ENCODE measurements at regions of chr3 and their contacts with region 1.

Region 1: GRCh38 chr3:122564155-122564912 is at the starts of genes DTX3L and PARP9:
- DNase-seq: peak; percentile 51
- H3K4me3 ChIP-seq: peak within 1 kb of the TSS; percentile 66
- H3K27ac ChIP-seq: no peak within 1 kb of the TSS
- H3K4me1 ChIP-seq: peaks cover 26% of the 10 kb centered on the region
- CTCF ChIP-seq: no peak
- total RNA-seq, gene DTX3L: 1.5 and 2.2 TPM in 2 replicates
- total RNA-seq, gene PARP9: 1.4 TPM in 2 replicates

Region 2: DNA sequence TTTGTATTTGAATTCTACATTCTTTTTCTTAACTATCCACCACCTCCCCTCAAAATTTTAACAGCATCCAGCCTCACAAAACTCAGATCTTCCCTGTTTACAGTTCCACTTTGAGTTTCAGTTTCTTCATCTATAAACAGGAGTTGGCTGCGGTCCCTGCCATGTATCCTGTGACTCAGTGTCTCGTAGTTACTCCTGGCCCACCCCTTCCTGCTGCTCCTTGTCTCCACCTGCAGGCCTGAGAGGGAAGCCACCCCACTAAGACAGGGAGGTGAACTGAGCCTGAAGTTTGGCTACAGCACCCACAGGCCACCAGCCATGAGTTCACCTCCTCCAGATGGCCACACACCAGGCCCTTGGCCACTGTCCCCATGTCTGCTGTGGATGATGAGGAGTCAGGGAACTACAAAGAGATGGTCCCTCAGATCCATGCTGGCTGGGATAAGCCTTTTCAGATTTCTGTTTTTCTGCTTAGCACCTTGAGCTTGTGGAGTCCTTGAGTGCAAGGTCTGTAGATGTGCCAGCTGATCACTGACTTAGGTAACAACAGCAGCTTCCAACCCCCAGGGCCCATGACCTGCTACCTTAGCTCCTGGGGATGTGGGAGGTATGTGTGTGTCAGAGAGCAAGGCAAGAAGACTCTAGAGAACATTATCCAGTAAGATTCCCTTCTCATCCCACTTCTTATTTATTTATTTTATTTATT is 471.7 kb before region 1 on chr3:
- CTCF ChIA-PET with region 1: no interaction called
- POLR2A ChIA-PET with region 1: no interaction called
- intact Hi-C with region 1: no loop called
- DNase-seq: peak; percentile 56
- H3K4me3 ChIP-seq: peak overlapping the region; percentile 49
- H3K27ac ChIP-seq: peak overlapping the region; percentile 82
- H3K4me1 ChIP-seq: peaks cover 68% of the 10 kb centered on the region
- CTCF ChIP-seq: peak; percentile 87

Region 3: DNA sequence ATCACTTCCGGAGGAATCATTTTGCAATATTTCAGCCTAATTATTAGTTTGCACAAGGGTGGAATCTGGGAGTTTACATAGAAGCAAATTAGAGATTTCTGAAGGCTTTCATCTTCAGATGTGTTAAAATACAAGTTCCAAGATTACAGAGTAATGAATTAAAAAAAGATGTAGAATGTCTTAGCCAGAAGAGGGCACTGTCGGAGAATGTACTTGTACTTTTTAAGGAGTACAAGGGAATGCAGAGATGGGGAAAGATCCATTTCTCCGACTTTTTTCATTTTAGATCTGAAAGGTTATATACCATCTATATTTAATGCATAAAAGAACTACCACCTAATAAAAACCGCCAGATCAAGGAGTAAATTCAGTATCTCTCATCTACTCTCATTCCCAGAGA is 105.3 kb before region 1 on chr3:
- CTCF ChIA-PET with region 1: no interaction called
- POLR2A ChIA-PET with region 1: no interaction called
- intact Hi-C with region 1: loop called (anchors 5 kb)
- DNase-seq: peak; percentile 51
- H3K4me3 ChIP-seq: no peak overlapping the region
- H3K27ac ChIP-seq: no peak overlapping the region
- H3K4me1 ChIP-seq: no peaks in the 10 kb centered on the region
- CTCF ChIP-seq: peak; percentile 85

Region 4: DNA sequence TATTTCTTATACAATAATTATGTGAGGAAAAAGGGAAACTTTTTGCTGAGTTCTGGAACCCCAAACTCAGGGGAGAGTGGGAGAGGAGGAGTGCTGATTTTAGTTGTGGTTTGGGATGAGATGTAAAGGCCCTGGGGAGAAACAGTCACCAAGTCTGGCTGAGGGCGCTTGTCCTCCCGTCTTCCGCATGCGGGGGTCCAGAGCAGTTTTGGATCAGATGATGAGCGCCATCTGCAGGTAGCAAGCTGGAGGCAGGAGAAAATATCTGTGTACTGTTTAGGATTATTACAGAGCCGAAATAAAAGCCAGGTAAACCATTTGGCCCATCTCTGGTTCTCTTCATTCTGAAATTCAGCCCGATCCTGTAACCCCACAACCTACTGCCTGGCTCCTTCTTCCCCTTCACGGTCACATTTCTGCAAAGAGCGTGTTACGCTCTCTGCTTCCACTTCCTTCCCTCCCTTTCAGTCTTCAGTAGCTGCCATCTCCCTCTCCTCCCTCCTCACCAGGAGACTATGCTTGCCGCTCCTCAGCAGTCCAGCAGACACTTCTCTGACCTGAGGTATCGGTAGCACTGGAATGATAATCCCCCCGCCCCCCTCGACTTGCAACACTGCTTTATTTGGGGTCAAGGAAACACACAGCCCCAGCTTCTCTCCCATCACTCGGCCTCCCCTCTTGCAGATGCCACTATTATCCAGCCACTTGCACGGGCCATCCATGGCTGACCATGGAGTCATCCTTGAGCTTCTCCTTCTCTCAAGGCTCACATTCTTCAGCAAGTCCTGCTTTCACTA is 114.9 kb after region 1 on chr3:
- CTCF ChIA-PET with region 1: interaction called, 4 read pairs
- POLR2A ChIA-PET with region 1: no interaction called
- intact Hi-C with region 1: loop called (anchors 1 kb)
- DNase-seq: peak; percentile 82
- H3K4me3 ChIP-seq: peak overlapping the region; percentile 76
- H3K27ac ChIP-seq: no peak overlapping the region
- H3K4me1 ChIP-seq: peaks cover 38% of the 10 kb centered on the region
- CTCF ChIP-seq: peak; percentile 93

Region 5: DNA sequence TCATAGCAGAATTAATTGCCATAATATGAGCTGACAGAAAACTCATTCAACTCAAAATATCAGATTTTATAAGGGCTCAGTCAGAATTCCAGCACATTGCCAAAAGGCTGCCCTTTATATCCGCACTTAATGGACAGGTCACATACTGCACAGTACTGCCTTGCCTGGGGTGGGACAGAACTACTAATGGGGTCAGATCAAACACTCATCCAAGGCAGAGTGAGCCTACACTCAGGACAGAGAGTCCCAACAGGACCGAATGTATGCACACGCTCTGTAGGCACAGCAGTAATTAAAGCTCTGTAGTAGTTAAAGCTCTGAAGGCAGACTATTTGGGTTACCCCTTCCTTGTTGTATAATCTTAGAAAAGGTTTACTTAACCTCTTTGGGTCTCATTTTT is 202.1 kb after region 1 on chr3:
- CTCF ChIA-PET with region 1: no interaction called
- POLR2A ChIA-PET with region 1: no interaction called
- intact Hi-C with region 1: no loop called
- DNase-seq: no peak
- H3K4me3 ChIP-seq: no peak overlapping the region
- H3K27ac ChIP-seq: no peak overlapping the region
- H3K4me1 ChIP-seq: no peaks in the 10 kb centered on the region
- CTCF ChIP-seq: no peak

Region 6: DNA sequence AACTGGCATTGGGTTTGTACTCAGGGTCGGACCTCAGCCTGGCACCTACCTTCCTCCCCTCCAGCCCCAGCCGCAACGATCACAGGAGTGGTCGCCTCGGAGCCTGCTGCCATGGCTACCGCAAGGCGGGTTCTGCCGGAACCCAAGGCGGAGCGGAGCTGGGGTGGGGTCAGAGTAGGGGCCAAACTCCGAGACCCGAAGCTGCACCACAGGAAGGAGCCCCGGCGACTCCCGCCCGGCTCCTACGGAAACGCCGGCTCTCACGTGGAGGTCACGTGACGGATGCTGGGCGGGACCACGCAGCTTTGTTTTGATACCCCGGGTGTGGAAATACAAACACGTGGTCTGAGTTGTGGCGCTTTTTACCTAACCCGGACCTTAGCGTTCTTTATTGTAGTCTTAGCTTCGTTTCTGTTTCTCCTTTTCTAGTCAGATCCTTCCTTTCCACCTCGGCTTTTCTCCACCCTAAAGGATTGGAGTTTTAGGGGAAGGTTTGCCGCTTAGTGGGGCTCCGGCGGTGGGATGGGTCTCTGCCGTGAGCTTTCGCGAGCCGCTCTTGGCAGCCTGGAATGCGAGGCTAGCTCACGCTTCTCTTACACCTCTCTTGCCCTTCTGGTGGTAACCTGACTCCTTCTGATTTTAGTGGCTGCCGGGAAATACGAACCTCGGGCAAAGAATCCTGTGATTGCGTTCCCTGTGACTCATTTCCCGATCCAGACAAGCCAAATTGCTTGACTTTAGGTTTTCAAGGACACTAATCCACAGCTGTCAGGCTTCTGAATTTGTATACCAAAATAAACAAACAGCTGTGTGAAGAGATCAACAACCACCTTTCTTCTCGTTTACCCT is 229.5 kb after region 1 on chr3 and contains the start of gene HSPBAP1:
- CTCF ChIA-PET with region 1: no interaction called
- POLR2A ChIA-PET with region 1: no interaction called
- intact Hi-C with region 1: loop called (anchors 5 kb)
- DNase-seq: peak; percentile 95
- H3K4me3 ChIP-seq: peak within 1 kb of the TSS; percentile 85
- H3K27ac ChIP-seq: peak within 1 kb of the TSS; percentile 66
- H3K4me1 ChIP-seq: peaks cover 30% of the 10 kb centered on the region
- CTCF ChIP-seq: no peak
- total RNA-seq, gene HSPBAP1: 8.8 and 11.9 TPM in 2 replicates

Region 7: DNA sequence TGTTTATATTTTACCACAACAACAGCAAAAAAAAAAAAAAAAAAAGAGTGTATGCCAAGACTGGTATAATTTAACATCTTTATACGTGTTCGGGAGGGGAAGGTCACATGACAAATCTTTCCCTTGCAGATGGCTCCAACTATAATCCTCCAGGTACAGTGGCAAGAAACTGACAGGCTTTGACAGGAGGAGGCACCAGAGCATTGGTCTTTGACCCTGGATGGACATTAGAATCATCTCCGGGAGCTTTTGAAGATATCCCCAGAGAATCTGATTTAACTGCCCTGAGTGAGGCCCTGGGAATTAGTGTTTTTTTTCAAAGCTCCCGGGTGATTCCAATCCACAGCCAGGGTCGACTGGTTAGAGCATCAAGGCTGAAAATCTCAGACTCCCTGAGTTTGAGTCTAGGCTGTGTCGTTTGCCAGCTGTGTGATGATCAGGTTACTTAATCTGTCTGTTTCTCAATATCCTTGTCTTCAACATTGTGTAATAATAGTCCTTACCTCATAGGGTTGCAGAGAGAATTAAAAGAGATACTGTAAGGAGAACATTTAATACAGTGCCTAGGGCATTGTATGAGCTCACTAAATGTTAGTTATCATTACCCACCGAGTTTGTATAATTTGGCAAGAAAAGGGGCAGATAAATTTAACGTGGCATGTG is 472.1 kb after region 1 on chr3:
- CTCF ChIA-PET with region 1: no interaction called
- POLR2A ChIA-PET with region 1: no interaction called
- intact Hi-C with region 1: loop called (anchors 10 kb)
- DNase-seq: no peak
- H3K4me3 ChIP-seq: no peak overlapping the region
- H3K27ac ChIP-seq: no peak overlapping the region
- H3K4me1 ChIP-seq: no peaks in the 10 kb centered on the region
- CTCF ChIP-seq: no peak